Sigmoid colon (tissue), 7 donors: ENCODE measurements at regions of chr2 and their contacts with region 1.

Region 1: DNA sequence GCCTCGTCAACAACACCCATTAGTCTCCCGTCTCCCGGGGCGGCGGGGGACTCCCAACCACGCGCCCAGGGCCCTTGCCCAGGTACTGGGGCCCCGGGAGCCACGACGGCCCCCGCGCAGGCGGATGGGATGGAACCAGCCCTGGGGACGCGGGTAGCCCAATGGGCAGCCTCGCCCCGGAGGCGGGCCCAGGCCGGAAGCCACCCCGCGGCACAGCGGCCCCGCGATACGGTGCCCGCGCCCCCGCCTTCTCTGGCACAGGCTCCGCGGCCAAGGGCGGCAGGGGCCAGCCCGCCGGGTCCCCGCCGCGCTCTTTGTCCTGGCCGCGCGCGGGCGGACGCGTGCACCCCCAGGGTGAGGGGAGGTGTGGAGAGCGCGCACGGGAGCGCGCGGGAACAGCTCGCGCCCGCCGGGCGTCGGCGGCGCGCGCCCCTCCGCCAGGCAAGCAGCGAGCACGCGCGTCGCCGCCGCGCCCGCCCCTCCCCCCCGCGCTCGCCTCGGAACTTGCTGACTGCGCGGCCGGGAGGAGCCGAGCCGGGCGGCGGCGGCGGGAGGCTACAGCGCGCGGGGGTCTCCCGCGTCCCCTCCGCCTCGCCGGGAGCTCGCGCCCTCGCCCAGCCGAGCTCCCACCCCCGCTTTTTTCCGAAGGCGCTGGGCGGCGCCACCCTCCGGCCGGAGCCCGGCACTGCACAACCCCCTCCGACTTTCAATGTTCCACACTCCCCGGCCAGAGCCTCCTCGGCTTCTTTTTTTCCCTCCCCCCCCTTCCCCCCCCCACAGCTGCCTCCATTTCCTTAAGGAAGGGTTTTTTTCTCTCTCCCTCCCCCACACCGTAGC is at the start of gene UBE2E3:
- DNase-seq: peak; percentile 88
- H3K4me3 ChIP-seq: peak within 1 kb of the TSS; percentile 56 to 78 (median 67)
- H3K27ac ChIP-seq: peak within 1 kb of the TSS; percentile 82 to 90 (median 88)
- H3K4me1 ChIP-seq: peaks cover 0 to 41% (median 18%) of the 10 kb centered on the region in 4 donors
- H3K27me3 ChIP-seq: no peaks in the 10 kb centered on the region
- CTCF ChIP-seq: peak in 3 of 4 experiments; percentile 20 to 68 (median 27)
- EP300 ChIP-seq: no peak
- POLR2A ChIP-seq: no peak
- total RNA-seq, gene UBE2E3: 37.5 to 64.7 (median 47.8) TPM

Region 2: DNA sequence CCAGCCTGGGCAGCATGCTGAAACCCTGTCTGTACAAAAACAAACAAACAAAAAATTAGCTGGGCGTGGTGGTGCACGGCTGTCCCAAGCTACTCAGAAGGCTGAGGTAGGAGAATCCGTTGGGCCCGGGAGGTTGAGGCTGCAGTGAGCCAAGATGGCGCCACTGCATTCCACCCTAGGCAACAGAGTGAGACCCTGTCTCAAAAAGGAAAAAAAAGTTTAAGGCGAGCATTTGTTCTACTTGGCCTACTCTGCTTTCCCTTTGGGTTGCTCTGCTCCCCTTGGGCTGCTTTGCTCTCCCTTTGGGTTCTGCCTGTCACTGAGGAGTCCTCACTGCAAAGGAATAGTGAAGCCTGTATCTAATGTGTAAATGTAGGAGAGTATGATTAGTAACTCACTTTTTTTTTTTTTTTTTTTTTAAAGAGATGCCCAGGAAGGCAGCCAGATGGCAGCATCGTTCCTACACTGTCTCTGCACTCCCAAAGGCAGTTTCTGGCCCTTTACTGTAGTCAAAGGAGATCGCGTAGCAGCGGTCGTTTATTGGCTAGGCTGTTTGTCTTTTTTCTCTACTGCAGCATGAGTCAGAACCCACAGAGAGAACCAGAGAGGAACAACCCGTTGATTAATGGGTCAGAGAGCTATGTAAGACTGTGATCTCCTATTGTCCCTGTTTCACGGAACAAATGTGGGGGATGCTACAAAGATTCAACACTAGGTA is 854.9 kb before region 1 on chr2:
- intact Hi-C with region 1: loop called (anchors 2 kb)
- DNase-seq: peak; percentile 84
- H3K4me3 ChIP-seq: no peak overlapping the region
- H3K27ac ChIP-seq: no peak overlapping the region
- H3K4me1 ChIP-seq: peaks cover 0 to 18% (median 9%) of the 10 kb centered on the region in 4 donors
- H3K27me3 ChIP-seq: no peaks in the 10 kb centered on the region
- CTCF ChIP-seq: peak in 3 of 4 experiments; percentile 33 to 49 (median 42)
- EP300 ChIP-seq: no peak
- POLR2A ChIP-seq: no peak

Region 3: GRCh38 chr2:180359522-180360282 is 620.6 kb before region 1 on chr2:
- intact Hi-C with region 1: loop called (anchors 10 kb)
- DNase-seq: no peak
- H3K4me3 ChIP-seq: no peak overlapping the region
- H3K27ac ChIP-seq: no peak overlapping the region
- H3K4me1 ChIP-seq: peaks cover 0 to 8% (median 7%) of the 10 kb centered on the region in 4 donors
- H3K27me3 ChIP-seq: no peaks in the 10 kb centered on the region
- CTCF ChIP-seq: no peak
- EP300 ChIP-seq: no peak
- POLR2A ChIP-seq: no peak

Region 4: GRCh38 chr2:181891258-181891965 is 911.1 kb after region 1 on chr2 and contains the start of gene ITPRID2:
- intact Hi-C with region 1: loop called (anchors 10 kb)
- DNase-seq: peak; percentile 93
- H3K4me3 ChIP-seq: peak within 1 kb of the TSS; percentile 91 to 98 (median 94)
- H3K27ac ChIP-seq: peak within 1 kb of the TSS; percentile 94 to 99 (median 96)
- H3K4me1 ChIP-seq: peaks cover 0 to 48% (median 29%) of the 10 kb centered on the region in 4 donors
- H3K27me3 ChIP-seq: no peaks in the 10 kb centered on the region
- CTCF ChIP-seq: no peak
- EP300 ChIP-seq: no peak
- POLR2A ChIP-seq: no peak
- total RNA-seq, gene ITPRID2: 70.9 to 129 (median 81.2) TPM